ENCODE measurements at regions of chr18 and their contacts with region 1.

Region 1: GRCh38 chr18:44651453-44651852 is 29.2 kb upstream of the SETBP1 start:
- DNase-seq: no peak
- CTCF ChIP-seq: no peak

Region 2: DNA sequence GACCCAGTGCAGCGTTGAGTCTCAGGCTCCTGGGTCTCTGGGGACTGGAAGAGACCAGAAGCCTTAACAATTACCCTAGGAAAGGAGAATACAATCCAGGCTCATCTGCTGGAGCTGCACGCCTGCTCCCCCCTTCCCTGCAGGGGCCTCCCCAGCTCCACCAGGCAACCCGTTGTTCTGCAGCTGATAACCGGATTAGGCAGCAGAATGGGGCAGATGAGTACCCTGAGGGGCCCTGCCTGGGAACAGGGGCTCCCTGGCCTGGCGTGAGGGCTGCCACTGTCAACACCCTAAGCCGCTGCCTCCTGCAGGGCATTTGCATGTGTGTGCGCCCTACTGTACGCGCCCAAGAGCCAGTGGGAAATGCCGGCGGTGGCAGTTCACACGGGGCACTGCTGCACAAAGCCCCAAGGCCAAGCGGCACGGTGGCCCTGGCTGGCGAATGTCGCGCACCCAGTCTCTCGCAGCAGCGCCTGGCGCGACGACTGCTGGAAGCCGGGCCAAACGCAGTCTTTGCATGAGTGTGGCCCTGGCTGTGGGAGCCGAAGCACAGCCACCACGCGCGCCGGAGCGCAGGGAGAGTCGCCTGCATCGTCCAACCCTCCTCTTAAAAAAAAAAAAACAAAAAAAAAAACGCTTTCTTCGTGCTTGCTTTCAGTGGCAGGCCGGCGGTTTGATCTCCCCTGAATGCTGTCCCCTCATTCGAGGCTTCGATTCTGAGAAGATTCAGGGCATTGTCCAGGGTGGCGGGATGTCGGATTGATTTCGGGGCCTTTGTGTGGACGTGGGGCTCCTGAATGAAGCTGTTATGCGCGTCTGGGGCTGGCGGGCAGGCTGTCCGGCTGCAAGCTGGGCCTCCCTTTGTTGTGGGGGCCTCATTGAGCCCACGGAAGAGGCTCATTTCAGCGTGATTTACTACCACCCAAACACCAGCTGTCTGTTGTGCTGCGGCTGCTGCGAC is 93.0 kb after region 1 on chr18:
- in situ Hi-C with region 1: no loop called
- DNase-seq: no peak
- CTCF ChIP-seq: no peak

Region 3: DNA sequence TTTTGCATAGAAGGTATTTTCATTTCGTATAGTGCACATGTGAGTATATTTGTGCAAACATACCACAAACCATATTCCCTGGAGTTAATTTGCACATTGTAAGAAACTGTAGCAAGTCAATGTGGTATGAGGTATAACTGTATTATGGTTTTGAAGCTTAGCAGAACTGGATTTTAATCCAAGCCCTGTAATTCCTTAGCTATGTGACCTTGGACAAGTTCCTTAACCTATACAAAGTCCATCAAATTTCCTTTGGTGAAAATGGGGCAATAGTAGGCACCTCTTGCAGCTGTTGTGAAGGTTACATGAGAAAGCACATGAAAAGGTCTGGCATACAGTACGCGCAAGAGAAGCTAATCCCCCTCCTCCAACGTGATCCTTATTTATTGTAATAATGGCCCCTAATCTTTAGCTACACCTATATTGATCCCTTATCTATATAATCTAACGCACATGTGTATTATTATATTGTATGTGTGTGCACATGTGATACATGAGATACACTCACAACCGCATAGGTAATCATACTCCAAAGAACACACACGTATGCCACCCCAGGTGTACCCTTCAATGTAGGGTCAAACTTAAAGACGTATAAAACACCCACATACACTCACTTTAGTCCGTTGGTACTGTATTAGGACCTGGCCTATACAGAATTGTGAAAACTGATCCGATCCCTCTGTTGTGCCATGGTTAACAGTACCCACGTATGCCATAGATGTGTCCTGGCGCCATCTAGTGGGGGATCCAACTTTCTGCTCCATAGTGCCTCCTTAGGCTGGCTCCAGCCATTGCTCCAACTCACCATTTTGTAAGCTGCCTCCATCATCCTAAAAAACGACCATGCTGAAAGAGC is 561.0 kb after region 1 on chr18:
- in situ Hi-C with region 1: loop called (anchors 25 kb)
- DNase-seq: peak; percentile 57
- CTCF ChIP-seq: peak; percentile 99

Measured in GM13977 (cell line).